ENCODE measurements at regions of chrX and their contacts with region 1.

Region 1: GRCh38 chrX:12974796-12975669 is at the start of gene TMSB4X:
- DNase-seq: peak; percentile 84 to 87
- H3K4me3 ChIP-seq: peak within 1 kb of the TSS; percentile 50 to 73
- H3K27ac ChIP-seq: peak within 1 kb of the TSS; percentile 97
- H3K4me1 ChIP-seq: no peaks in the 10 kb centered on the region
- H3K27me3 ChIP-seq: no peaks in the 10 kb centered on the region
- CTCF ChIP-seq: no peak
- POLR2A ChIP-seq: peak; percentile 92 to 97
- total RNA-seq, gene TMSB4X: 2,867 to 6,849 (median 3,091) TPM

Region 2: GRCh38 chrX:13101441-13102139 is 126.6 kb after region 1 on chrX:
- intact Hi-C with region 1: loop called (anchors 10 kb)
- DNase-seq: peak; percentile 64 to 82
- H3K4me3 ChIP-seq: no peak overlapping the region
- H3K27ac ChIP-seq: peak overlapping the region; percentile 56 to 75
- H3K4me1 ChIP-seq: peaks cover 0 to 4% of the 10 kb centered on the region in 2 donors
- H3K27me3 ChIP-seq: no peaks in the 10 kb centered on the region
- CTCF ChIP-seq: no peak
- POLR2A ChIP-seq: peak in 1 of 2 donors; percentile 22

Region 3: DNA sequence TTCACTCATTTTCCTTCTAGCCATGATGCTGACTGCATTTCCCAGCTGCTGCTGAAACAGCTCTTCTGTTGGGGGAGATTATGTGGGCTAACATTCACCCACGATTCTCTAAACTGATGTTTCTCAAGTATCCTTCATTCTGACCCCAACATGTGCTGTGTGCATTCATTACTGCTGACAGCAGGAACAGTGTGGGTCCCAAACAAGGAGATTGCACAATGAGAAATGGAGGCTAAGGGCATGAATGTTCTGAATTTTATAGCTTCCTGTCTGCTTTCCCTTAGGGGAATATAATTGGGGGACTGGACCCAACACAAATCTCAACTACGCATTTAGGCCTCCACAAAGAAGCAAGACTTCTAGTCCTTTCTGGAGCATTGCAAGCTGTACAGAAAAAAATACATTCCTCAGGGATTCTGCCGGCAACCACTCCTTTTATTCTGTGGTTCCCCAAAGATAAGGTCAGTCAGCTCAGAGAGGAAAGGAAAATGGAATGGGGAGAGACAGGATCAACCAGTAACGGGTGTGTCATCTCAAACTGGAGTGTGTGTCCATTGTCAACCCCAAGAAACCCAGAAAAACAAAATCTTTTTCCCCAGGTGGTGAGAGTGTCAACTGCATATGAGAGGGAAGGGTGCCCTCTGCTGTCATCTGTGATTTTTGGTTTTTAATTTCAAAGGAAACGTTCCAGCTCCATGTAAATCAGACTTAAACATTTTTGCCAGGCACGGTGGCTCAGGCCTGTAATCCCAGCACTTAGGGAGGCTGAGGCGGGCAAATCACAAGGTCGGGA is 512.9 kb after region 1 on chrX:
- intact Hi-C with region 1: loop called (anchors 5 kb)
- DNase-seq: peak; percentile 37 to 66
- H3K4me3 ChIP-seq: no peak overlapping the region
- H3K27ac ChIP-seq: peak overlapping the region; percentile 83 to 87
- H3K4me1 ChIP-seq: no peaks in the 10 kb centered on the region
- H3K27me3 ChIP-seq: no peaks in the 10 kb centered on the region
- CTCF ChIP-seq: peak; percentile 58 to 80 (median 68)
- POLR2A ChIP-seq: no peak